IMR-90 (cell line): ENCODE measurements at regions of chr14 and their contacts with region 1.

Region 1: GRCh38 chr14:89040460-89041259 is 216.2 kb downstream of the TTC8 start:
- DNase-seq: peak; percentile 86
- ATAC-seq: peak; percentile 95
- H3K4me3 ChIP-seq: peak overlapping the region; percentile 38
- H3K27ac ChIP-seq: peak overlapping the region; percentile 80
- H3K4me1 ChIP-seq: peaks cover 3% of the 10 kb centered on the region; the same call in 1 of the 2 replicates
- H3K27me3 ChIP-seq: no peaks in the 10 kb centered on the region
- CTCF ChIP-seq: peak; percentile 92
- POLR2A ChIP-seq: peak; percentile 74; the same call in 1 of the 2 replicates
- RAD21 ChIP-seq: peak; percentile 87

Region 2: GRCh38 chr14:89000007-89000942 is 40.4 kb before region 1 on chr14:
- CTCF ChIA-PET with region 1: no interaction called
- POLR2A ChIA-PET with region 1: no interaction called
- dilution Hi-C with region 1: no loop called
- in situ Hi-C with region 1: no loop called
- intact Hi-C with region 1: no loop called
- DNase-seq: peak; percentile 98
- ATAC-seq: peak; percentile 87
- H3K4me3 ChIP-seq: no peak overlapping the region
- H3K27ac ChIP-seq: peak overlapping the region; percentile 96
- H3K4me1 ChIP-seq: peaks cover 24% of the 10 kb centered on the region
- H3K27me3 ChIP-seq: no peaks in the 10 kb centered on the region
- CTCF ChIP-seq: no peak
- POLR2A ChIP-seq: no peak
- RAD21 ChIP-seq: 0 out of 2 replicates have a peak, but pooled peaks have one; percentile 11

Region 3: DNA sequence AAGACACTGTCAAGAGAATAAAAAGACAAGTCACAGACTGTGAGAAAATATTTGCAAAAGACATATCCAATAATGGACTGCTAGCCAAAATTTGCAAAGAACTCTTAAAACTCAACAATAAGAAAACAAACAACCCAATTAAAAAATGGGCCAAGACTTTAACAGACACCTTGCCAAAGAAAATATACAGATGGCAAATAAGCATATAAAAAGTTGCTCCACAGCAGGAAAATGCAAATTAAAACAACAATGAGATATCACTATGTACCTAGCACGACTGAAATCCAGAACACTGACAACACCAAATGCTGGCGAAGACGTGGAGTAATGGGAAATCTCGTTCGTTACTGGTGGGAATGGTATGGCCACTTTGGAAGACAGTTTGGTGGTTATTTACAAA is 12.6 kb after region 1 on chr14:
- CTCF ChIA-PET with region 1: no interaction called
- POLR2A ChIA-PET with region 1: no interaction called
- dilution Hi-C with region 1: no loop called
- in situ Hi-C with region 1: no loop called
- intact Hi-C with region 1: no loop called
- DNase-seq: no peak
- ATAC-seq: no peak
- H3K4me3 ChIP-seq: no peak overlapping the region
- H3K27ac ChIP-seq: no peak overlapping the region
- H3K4me1 ChIP-seq: no peaks in the 10 kb centered on the region
- H3K27me3 ChIP-seq: no peaks in the 10 kb centered on the region
- CTCF ChIP-seq: no peak
- POLR2A ChIP-seq: no peak
- RAD21 ChIP-seq: no peak

Region 4: DNA sequence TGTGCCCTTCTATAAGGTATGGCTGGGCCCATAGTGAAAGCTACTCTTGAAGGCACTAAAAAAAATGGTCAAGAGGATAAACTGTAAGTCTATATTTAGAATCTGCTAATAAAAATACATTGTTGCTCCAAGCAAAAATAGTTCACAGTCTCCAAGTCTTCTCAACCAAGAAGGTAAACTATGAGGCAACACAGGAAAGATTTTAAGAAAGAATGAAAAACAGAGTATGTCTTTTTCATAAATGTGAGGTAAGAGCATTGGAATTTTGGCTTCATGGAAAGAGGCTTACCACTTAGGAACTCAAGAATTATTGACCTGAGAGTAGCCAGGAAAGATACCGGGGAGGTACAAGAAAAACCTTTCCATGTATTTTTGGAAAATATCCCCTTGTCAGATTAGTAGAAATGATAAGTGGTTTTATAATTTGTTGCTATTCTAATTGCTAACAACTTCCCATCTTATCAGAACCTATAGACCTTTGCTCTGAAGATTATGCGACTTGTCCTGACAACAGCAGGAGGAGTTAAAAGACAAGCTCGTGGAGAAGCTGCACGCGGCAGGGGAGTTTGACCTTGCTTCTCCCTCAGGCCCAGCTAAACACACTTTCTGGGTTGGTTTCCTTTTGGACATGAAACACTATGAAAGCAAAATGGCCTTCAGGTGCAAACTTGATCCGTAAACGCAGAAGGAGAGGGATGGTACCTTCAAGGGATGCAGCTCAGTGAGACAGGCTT is 138.3 kb after region 1 on chr14:
- CTCF ChIA-PET with region 1: no interaction called
- POLR2A ChIA-PET with region 1: no interaction called
- dilution Hi-C with region 1: no loop called
- in situ Hi-C with region 1: no loop called
- intact Hi-C with region 1: loop called (anchors 5 kb)
- DNase-seq: peak; percentile 68
- ATAC-seq: peak; percentile 60
- H3K4me3 ChIP-seq: no peak overlapping the region
- H3K27ac ChIP-seq: no peak overlapping the region
- H3K4me1 ChIP-seq: peaks cover 6% of the 10 kb centered on the region
- H3K27me3 ChIP-seq: no peaks in the 10 kb centered on the region
- CTCF ChIP-seq: no peak
- POLR2A ChIP-seq: no peak
- RAD21 ChIP-seq: no peak

Region 5: DNA sequence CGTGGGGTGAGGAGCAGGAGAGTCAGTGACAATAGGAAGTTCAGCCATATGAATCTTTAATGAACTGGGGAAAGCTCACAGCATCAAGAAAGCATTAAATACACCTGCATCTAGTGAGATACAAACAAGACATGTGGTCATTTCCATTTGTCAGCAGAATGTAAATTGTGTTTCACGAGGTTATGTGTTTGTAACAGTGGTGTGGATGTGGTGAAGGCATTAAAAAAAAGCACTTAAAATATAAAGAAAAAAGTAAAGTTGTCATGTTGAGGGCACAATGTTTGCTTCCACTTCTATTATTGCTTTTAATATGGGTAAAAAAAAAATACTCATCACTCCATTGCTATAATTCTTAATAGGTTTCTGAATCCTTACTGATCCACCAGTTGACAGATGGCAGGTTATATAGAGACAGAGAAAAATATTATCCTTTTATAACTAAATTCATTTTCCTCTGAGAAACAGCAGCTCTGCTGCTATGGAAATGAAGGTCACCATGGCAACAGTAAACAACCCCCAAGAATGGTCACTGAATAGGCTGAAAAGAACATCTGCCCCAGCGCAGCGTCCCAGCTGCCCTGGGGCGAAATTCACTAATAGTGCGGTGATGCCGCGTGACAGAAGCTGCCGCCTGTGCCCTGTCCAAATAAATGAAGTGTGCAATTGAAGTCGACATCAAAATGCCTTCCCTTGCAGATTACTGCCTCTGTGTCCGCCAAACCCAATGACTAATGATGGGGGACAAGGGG is 150.3 kb after region 1 on chr14:
- CTCF ChIA-PET with region 1: no interaction called
- POLR2A ChIA-PET with region 1: no interaction called
- dilution Hi-C with region 1: no loop called
- in situ Hi-C with region 1: no loop called
- intact Hi-C with region 1: no loop called
- DNase-seq: no peak
- ATAC-seq: no peak
- H3K4me3 ChIP-seq: no peak overlapping the region
- H3K27ac ChIP-seq: no peak overlapping the region
- H3K4me1 ChIP-seq: peaks cover 10% of the 10 kb centered on the region
- H3K27me3 ChIP-seq: no peaks in the 10 kb centered on the region
- CTCF ChIP-seq: no peak
- POLR2A ChIP-seq: no peak
- RAD21 ChIP-seq: no peak

Region 6: DNA sequence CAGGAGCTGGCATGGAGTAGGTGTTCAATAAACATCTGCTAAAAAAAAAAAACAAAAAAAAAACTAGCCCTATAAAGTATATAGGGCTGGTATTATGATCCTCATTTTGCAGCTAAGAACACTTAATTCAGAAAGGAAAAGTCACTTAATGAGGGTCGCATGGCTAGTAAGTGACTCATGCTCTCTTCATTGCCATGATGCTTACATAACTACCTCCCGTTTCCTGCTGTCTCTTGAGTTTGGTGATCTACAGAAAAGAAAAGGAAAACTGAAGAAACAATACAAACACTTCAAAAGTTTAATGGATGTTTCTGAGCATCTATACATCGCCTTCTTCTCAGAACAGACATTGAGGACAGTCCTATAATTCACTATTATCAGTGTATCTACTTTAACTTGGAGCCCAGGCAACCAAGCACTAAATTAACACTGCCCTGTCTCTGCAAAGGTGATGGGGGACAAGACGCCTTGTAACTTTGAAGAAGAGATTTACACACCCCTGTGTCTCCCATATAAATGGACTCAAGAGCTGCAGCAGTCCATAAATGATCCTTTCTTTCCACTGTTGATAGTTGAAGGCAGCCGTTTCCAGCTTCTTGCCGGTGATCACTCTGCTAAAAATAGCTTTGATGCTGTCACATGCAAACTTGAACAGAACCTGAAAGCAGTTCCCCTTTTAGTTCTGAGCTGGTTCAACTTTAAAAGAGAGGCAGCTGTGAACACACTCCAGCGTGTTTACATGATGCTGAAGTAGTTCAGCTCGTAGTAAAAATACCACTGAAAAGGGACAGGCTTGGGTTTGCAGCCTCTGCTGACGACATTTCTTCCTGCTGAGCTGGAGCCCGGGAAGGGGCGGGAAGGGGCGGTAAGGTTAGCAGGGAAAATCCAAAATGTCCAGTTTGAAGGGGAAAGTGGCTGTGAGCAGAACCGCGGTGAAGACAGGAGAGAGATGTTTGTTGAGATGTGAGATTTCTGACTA is 263.1 kb after region 1 on chr14:
- CTCF ChIA-PET with region 1: no interaction called
- POLR2A ChIA-PET with region 1: interaction called, 3 read pairs
- dilution Hi-C with region 1: no loop called
- in situ Hi-C with region 1: no loop called
- intact Hi-C with region 1: loop called (anchors 10 kb)
- DNase-seq: peak; percentile 95
- ATAC-seq: peak; percentile 81
- H3K4me3 ChIP-seq: peak overlapping the region; percentile 26; the same call in 1 of the 2 replicates
- H3K27ac ChIP-seq: peak overlapping the region; percentile 83
- H3K4me1 ChIP-seq: peaks cover 27% of the 10 kb centered on the region
- H3K27me3 ChIP-seq: no peaks in the 10 kb centered on the region
- CTCF ChIP-seq: no peak
- POLR2A ChIP-seq: peak; percentile 71
- RAD21 ChIP-seq: no peak; the same call in 1 of the 2 replicates

Region 7: DNA sequence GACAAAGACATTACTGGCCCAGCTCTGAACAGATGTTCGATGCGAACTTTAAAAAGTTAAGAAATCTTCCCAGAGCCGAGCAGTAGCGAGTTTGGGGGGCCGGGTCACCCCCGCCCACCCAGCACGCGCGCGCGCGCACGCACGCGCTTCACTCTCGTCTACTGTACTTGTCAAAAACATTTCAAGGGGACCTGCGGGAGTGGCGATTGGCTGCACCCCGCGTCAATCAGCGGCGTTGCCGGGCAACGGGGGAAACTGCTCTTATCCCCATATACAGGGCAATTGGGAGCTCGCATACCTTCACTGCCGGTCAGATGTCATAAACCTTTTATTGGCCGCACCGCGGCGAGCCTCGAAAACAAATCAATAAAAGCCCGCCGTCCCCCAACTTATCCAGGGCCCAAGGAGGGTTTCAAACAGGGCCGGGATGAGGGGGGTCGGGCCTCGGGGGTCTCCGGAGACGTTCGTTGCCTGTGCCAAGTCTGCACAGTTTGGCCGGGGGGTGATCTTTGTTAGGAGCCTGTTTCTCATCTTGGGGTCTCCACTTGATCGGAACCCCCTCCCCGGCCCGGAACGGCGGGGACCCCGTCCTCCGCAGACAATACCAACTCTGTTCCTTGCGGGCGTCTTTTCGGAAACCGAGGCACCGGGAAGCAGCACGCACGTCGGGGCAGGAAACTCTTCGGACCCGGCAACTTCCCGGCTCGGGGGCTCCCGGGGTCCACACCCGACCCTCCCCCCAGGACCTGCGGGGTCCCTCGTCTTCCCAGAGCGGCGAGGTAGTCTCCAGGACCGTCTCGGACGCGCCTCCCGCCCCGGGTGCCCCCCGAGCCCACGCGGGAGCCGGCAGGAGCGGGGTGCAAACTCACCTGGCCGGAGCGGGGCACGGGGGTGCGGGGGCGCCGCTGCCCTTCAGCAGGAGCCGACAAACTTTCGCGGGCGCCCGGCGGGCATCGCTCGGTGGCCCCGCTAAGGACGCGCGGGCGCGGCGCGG is 375.6 kb after region 1 on chr14:
- CTCF ChIA-PET with region 1: interaction called, 5 read pairs
- POLR2A ChIA-PET with region 1: no interaction called
- dilution Hi-C with region 1: no loop called
- in situ Hi-C with region 1: loop called (anchors 5 kb)
- intact Hi-C with region 1: loop called (anchors 2 kb)
- DNase-seq: peak; percentile 97
- ATAC-seq: peak; percentile 81
- H3K4me3 ChIP-seq: peak overlapping the region; percentile 62
- H3K27ac ChIP-seq: peak overlapping the region; percentile 60
- H3K4me1 ChIP-seq: peaks cover 12% of the 10 kb centered on the region
- H3K27me3 ChIP-seq: no peaks in the 10 kb centered on the region
- CTCF ChIP-seq: no peak
- POLR2A ChIP-seq: peak; percentile 69
- RAD21 ChIP-seq: no peak; the same call in 1 of the 2 replicates

Region 8: GRCh38 chr14:89618811-89619551 is 578.3 kb after region 1 on chr14:
- CTCF ChIA-PET with region 1: no interaction called
- POLR2A ChIA-PET with region 1: no interaction called
- dilution Hi-C with region 1: no loop called
- in situ Hi-C with region 1: no loop called
- intact Hi-C with region 1: loop called (anchors 1 kb)
- DNase-seq: peak; percentile 67
- ATAC-seq: peak; percentile 91
- H3K4me3 ChIP-seq: peak overlapping the region; percentile 78
- H3K27ac ChIP-seq: peak overlapping the region; percentile 87
- H3K4me1 ChIP-seq: peaks cover 12% of the 10 kb centered on the region
- H3K27me3 ChIP-seq: no peaks in the 10 kb centered on the region
- CTCF ChIP-seq: peak; percentile 4; the same call in 1 of the 2 replicates
- POLR2A ChIP-seq: peak; percentile 49; the same call in 1 of the 2 replicates
- RAD21 ChIP-seq: peak; percentile 34

Region 9: DNA sequence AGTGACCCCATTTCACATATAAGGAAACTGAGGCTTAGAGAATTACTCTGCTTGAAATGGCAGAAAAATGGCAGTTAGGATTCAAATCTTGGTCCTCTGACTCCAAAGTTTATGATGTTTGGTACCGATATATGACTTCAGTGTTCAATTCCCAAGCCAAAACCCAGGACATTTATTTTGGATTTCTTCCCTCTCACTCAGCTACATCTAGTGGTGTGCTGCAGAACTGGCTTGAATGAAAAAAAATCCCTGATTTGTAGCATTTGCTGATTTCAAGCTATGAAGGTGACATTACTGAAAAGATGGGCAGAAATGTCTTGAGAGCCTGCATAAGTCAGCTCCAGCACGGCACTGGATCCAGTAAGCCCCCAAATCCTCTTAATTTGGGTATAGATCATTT is 807.5 kb after region 1 on chr14:
- CTCF ChIA-PET with region 1: interaction called, 3 read pairs
- POLR2A ChIA-PET with region 1: no interaction called
- dilution Hi-C with region 1: no loop called
- in situ Hi-C with region 1: loop called (anchors 5 kb)
- intact Hi-C with region 1: loop called (anchors 1 kb)
- DNase-seq: peak; percentile 71
- ATAC-seq: 0 out of 2 replicates have a peak, but pooled peaks have one; percentile 3
- H3K4me3 ChIP-seq: no peak overlapping the region
- H3K27ac ChIP-seq: no peak overlapping the region
- H3K4me1 ChIP-seq: peaks cover 16% of the 10 kb centered on the region
- H3K27me3 ChIP-seq: no peaks in the 10 kb centered on the region
- CTCF ChIP-seq: peak; percentile 70
- POLR2A ChIP-seq: no peak
- RAD21 ChIP-seq: peak; percentile 85

Region 10: GRCh38 chr14:89915114-89915878 is 874.6 kb after region 1 on chr14:
- CTCF ChIA-PET with region 1: interaction called, 4 read pairs
- POLR2A ChIA-PET with region 1: no interaction called
- dilution Hi-C with region 1: no loop called
- in situ Hi-C with region 1: loop called (anchors 10 kb)
- intact Hi-C with region 1: loop called (anchors 1 kb)
- DNase-seq: peak; percentile 80
- ATAC-seq: peak; percentile 48
- H3K4me3 ChIP-seq: no peak overlapping the region
- H3K27ac ChIP-seq: peak overlapping the region; percentile 19; the same call in 1 of the 2 replicates
- H3K4me1 ChIP-seq: peaks cover 27% of the 10 kb centered on the region
- H3K27me3 ChIP-seq: no peaks in the 10 kb centered on the region
- CTCF ChIP-seq: peak; percentile 90
- POLR2A ChIP-seq: 0 out of 2 replicates have a peak, but pooled peaks have one; percentile 23
- RAD21 ChIP-seq: peak; percentile 90